Right ventricle myocardium inferior (tissue), 1 donor: ENCODE measurements at regions of chr1 and their contacts with region 1.

Region 1: GRCh38 chr1:170531758-170532657 is at the start of gene GORAB:
- DNase-seq: peak; percentile 96
- ATAC-seq: peak; percentile 98
- total RNA-seq, gene GORAB: 7.8 TPM

Region 2: DNA sequence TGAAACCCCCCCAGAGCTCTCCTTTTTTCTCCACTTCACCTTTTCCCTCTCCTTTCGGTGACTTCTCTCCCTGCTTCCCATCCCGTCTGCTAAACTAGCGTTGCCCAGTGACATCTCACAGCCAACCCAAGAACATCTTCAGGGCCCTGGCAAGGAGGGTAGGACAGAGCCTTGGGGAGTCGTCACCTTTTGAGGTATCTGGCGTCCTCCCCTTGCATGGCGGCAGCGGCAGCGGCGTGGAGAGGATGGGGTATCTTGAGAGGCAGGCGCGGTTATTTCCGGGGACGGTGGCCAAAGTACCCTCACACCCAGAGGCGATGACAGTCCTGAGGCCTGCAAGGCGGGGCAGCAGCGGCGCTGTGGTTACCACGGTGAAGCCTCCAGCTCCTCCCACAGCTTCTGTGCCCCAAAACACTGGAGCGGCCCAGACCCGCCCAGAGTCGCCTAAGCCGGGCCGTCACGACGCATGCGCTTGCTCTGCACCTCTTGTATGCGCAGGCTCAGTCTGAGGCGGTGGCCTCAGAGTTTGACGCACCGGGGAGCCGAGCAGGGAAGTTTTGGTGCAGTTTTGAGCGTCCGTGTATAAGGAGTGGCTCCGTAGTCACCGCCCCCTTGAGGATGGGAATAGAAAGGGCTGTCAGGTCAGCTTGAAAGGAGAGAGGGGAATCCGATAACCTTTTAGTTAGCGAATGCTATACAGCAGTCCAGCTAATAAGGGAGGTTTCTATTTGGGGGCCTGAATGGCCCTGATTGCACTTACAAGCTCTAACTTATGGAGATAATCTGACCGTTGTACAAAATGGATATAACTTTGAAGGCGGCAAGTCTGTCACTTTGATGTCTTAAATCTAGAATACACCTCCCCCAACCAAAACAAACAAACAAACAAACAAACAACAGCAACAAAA is 457.5 kb before region 1 on chr1 and contains the start of gene KIFAP3:
- intact Hi-C with region 1: loop called (anchors 5 kb)
- DNase-seq: peak; percentile 99
- ATAC-seq: peak; percentile 100
- total RNA-seq, gene KIFAP3: 31.0 TPM

Region 3: DNA sequence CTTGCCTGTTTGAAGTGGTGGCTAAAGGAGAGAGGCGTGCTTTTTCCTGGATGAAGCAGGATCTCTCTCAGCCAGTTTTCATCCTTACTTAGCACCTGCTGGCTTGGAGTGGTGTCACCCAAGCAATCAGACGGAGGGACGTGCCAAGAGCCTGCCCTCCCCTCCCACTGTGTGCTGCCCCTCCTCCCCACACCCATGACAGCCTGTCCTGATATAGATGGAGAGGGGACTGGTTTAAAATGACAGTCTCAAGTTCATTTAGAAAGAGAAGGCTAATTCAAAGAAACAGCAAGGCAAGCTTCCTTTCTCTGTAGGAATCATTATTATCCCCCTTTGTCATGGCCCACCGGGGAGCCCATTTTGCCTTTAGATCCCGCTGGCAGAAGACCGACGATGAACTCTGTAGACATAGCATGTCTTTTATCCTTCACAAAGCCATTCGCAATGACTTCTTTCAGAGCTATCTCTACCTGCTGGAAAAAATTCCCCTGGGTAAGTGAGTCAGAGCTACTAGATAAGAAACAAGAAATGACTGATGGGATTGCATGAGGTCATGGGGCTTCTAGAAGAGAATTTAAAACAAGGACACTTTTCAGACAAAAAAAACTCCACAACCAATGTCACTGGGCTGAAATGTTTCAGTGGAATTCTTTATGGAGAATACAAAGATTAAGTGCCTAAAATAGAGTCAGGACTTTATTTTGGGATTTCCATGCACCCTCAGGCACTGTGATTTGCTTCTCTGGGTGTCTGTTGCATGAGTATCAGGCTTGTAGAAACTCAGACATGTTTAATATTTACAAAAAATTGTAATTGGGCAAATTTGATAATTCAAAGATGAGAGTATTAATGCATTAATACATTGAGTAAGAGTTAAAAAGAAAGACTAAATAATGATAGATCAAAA is 386.0 kb before region 1 on chr1 and contains the start of gene NTMT2:
- intact Hi-C with region 1: loop called (anchors 10 kb)
- DNase-seq: peak; percentile 63
- ATAC-seq: peak; percentile 95
- total RNA-seq, gene NTMT2: 5.3 TPM

Region 4: DNA sequence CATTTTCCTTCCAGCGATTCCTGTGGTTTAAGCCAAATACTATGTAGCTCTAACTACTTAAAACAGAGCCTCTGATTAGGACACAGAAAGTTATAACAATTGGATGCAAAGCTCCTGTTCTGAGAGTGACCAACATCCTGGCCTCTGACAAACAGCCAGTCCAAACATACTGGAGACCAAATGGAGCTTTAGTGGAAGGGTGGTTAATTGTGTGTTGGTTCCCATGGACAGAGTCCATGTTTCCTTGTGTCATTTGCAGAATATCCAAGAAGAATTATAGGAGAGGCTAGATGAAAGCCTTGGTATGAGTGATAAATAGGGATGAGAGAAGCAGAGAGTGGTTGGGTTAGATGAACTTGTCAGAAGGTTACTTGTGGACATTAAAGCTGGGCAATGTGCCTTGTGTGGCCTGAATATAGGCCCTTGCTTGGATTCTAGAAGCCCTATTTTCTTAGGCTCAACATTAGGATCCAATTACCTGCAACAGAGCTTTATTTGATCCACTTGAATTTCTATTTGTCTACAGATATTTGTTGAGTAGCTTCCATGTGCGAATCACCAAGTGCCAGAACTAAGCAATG is 180.6 kb before region 1 on chr1:
- intact Hi-C with region 1: loop called (anchors 5 kb)
- DNase-seq: no peak
- ATAC-seq: peak; percentile 23

Region 5: GRCh38 chr1:170388489-170388888 is 143.5 kb before region 1 on chr1:
- intact Hi-C with region 1: no loop called
- DNase-seq: no peak
- ATAC-seq: no peak

Region 6: GRCh38 chr1:170410401-170411166 is 121.4 kb before region 1 on chr1:
- intact Hi-C with region 1: loop called (anchors 10 kb)
- DNase-seq: no peak
- ATAC-seq: peak; percentile 84

Region 7: GRCh38 chr1:170729225-170730002 is 197.4 kb after region 1 on chr1:
- intact Hi-C with region 1: loop called (anchors 1 kb)
- DNase-seq: no peak
- ATAC-seq: peak; percentile 87